Body of pancreas (tissue), 4 donors: ENCODE measurements at regions of chr3 and their contacts with region 1.

Region 1: DNA sequence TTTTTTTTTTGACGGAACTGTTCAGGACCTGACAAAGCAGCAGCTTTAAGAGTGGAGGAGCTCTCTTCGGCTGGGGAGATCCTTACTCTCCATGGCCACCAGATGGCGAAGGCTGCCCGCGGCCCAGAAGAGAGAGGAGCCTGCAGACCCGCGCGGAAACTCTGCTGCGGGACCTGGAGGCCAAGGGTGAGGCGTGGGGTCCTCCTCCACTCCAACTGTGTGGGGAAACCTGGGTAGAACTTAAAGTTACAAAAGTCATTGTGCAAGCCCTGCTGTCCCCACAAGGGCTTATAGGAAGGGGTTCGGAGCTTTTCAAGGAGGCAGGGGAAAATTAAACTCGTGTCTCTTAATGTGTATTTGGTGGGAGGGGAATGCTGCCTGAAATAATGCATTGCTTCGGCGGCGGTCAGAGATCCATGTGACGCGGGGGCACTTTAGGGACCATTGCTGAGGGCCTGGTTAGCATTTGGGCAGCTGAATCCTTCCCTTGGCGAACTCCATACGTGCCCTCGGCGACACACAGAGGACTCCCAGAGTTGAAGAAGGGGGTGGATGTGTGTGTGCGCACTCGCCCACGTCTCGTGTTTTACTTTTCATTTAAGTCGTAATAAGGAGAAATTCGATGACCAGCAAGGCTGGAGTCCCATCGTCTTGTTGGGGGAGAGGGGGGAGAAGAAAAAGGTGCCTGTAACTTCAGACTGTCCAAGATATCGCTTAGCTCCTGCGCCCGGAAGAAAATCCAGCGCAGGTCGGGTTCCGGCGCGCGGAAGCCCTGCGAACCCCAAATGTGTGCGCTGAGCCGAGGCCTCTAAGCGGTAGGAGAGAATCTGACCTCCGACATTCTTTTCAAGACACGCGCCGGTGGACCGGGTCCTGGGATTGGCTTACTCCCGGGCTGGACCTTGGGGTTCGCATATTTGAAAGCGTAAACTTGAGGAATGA is 9.7 kb downstream of the EOMES start:
- DNase-seq: peak; percentile 76 to 79 (median 78)
- ATAC-seq: peak; percentile 91
- H3K4me3 ChIP-seq: peak overlapping the region; percentile 53 to 68
- H3K27ac ChIP-seq: no peak overlapping the region
- H3K4me1 ChIP-seq: peaks cover 29% of the 10 kb centered on the region
- H3K27me3 ChIP-seq: peaks cover 0 to 16% of the 10 kb centered on the region in 2 donors
- CTCF ChIP-seq: peak; percentile 68 to 87 (median 76)
- POLR2A ChIP-seq: no peak

Region 2: GRCh38 chr3:28317438-28318022 is 605.1 kb after region 1 on chr3:
- intact Hi-C with region 1: loop called (anchors 10 kb)
- DNase-seq: peak in 3 of 4 donors; percentile 14 to 44 (median 38)
- ATAC-seq: peak; percentile 69
- H3K4me3 ChIP-seq: no peak overlapping the region
- H3K27ac ChIP-seq: no peak overlapping the region
- H3K4me1 ChIP-seq: no peaks in the 10 kb centered on the region
- H3K27me3 ChIP-seq: no peaks in the 10 kb centered on the region
- CTCF ChIP-seq: peak in 6 of 7 experiments; percentile 43 to 54 (median 48)
- POLR2A ChIP-seq: no peak